ENCODE measurements at regions of chr13 and their contacts with region 1.

Region 1: GRCh38 chr13:31044377-31045285 is 112.2 kb downstream of the TEX26 start:
- DNase-seq: peak; percentile 75 to 78 (median 76)
- ATAC-seq: peak; percentile 90
- H3K4me3 ChIP-seq: no peak overlapping the region
- H3K27ac ChIP-seq: no peak overlapping the region
- H3K4me1 ChIP-seq: peaks cover 8% of the 10 kb centered on the region
- H3K27me3 ChIP-seq: no peaks in the 10 kb centered on the region
- CTCF ChIP-seq: peak; percentile 80 to 97 (median 87)
- POLR2A ChIP-seq: no peak

Region 2: DNA sequence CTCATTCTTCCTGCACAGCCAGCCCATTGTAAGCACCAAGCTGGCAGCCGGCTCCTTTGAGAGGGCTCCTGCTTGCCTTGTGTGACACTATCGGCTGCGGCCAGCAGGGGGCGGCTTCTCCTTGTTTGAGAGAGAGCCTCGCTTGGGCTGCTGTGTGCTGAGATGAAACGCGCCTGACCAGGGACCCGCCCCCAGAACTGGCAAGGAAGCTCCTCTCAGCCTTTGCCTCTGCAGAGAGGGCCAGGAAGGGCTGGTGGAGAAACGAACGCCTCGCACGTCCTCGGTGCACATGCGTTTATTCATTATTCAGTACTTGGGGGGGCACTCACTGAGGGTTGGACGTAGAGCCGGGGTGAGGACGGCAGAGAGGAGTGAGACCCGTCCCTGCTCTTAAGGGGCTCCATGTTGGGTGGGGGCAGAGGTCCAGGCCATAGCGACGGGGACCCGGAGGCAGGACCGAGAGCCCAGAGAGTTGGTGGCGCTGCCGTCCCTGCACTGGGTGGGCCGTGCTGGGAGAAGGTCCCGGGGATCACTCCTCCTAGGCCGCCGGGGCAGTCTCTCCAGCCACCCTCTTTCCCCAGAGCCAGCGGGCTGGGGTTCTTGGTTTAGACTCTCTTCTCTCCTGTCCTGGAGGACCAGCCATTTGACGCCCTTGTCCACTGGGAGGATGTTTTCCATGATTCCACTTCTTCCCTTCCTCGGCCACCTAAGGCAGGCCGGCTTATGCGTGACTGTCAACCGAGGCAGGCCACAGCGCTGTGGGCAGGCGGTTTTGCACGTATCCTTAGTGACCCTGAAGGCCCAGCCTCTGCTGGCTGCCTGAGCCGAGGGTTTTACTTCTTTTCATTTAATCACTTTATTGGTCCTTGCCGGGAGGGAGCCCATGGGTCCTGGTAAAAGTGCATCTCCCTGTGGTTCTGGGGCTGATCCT is 911.7 kb before region 1 on chr13:
- intact Hi-C with region 1: loop called (anchors 10 kb)
- DNase-seq: peak; percentile 95 to 98 (median 96)
- ATAC-seq: peak; percentile 97
- H3K4me3 ChIP-seq: no peak overlapping the region
- H3K27ac ChIP-seq: no peak overlapping the region
- H3K4me1 ChIP-seq: peaks cover 6% of the 10 kb centered on the region
- H3K27me3 ChIP-seq: no peaks in the 10 kb centered on the region
- CTCF ChIP-seq: peak; percentile 76 to 92 (median 87)
- POLR2A ChIP-seq: no peak

Region 3: DNA sequence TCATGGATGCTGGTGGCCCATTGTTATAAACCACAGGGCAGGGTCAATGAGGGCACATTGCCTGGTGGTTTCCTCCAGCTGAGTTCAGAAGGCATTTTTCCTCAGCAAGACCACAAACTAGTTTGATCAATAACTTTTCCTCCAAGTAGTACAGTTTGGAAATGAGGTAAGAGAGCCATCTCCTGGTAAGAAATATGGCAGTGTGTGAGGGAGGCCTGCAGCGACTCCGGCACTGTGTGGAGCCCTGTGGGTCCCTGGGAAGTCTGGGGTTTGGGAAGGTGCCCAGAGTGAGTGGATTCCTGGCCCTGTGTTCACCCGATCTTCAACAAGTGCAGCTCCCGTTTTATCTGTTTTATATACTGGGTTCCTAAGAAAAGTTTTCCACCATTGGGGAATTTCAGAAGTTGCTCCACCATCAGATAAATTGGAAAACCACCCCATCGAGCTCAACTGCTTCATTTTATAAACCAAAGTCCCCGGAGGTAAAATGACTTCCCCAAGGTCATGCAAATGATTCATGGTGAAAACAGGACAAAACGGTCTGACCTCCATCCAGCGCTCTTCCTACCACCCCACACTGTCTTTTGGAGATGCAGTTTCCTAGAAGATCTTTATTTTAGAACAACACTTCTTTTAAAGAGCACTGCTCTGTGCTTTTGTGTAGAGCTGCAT is 885.7 kb before region 1 on chr13:
- intact Hi-C with region 1: no loop called
- DNase-seq: no peak
- ATAC-seq: no peak
- H3K4me3 ChIP-seq: no peak overlapping the region
- H3K27ac ChIP-seq: no peak overlapping the region
- H3K4me1 ChIP-seq: no peaks in the 10 kb centered on the region
- H3K27me3 ChIP-seq: no peaks in the 10 kb centered on the region
- CTCF ChIP-seq: peak in 4 of 7 experiments; percentile 11 to 19 (median 14)
- POLR2A ChIP-seq: no peak